ENCODE measurements at regions of chr19 and their contacts with region 1.

Region 1: GRCh38 chr19:13880059-13881043 is 3.4 kb downstream of the NANOS3 start:
- DNase-seq: peak; percentile 97
- ATAC-seq: peak; percentile 99
- H3K4me3 Mint-ChIP-seq: peak overlapping the region; percentile 19
- H3K27ac Mint-ChIP-seq: peak overlapping the region; percentile 30
- H3K4me1 Mint-ChIP-seq: peaks cover 28% of the 10 kb centered on the region
- H3K27me3 Mint-ChIP-seq: peaks cover 3% of the 10 kb centered on the region
- CTCF ChIP-seq: peak; percentile 98

Region 2: GRCh38 chr19:13905938-13906904 is 25.9 kb after region 1 on chr19 and contains the starts of genes BRME1 and CC2D1A:
- CTCF ChIA-PET with region 1: interaction called, 3 read pairs
- POLR2A ChIA-PET with region 1: interaction called, 5 read pairs
- intact Hi-C with region 1: loop called (anchors 2 kb)
- DNase-seq: peak; percentile 93
- ATAC-seq: peak; percentile 99
- H3K4me3 Mint-ChIP-seq: peak within 1 kb of the TSS; percentile 87
- H3K27ac Mint-ChIP-seq: peak within 1 kb of the TSS; percentile 78
- H3K4me1 Mint-ChIP-seq: peaks cover 11% of the 10 kb centered on the region
- H3K27me3 Mint-ChIP-seq: no peaks in the 10 kb centered on the region
- CTCF ChIP-seq: no peak
- total RNA-seq, gene BRME1: 1.2 and 2.0 TPM in 2 replicates
- total RNA-seq, gene CC2D1A: 32.4 and 35.6 TPM in 2 replicates

Region 3: DNA sequence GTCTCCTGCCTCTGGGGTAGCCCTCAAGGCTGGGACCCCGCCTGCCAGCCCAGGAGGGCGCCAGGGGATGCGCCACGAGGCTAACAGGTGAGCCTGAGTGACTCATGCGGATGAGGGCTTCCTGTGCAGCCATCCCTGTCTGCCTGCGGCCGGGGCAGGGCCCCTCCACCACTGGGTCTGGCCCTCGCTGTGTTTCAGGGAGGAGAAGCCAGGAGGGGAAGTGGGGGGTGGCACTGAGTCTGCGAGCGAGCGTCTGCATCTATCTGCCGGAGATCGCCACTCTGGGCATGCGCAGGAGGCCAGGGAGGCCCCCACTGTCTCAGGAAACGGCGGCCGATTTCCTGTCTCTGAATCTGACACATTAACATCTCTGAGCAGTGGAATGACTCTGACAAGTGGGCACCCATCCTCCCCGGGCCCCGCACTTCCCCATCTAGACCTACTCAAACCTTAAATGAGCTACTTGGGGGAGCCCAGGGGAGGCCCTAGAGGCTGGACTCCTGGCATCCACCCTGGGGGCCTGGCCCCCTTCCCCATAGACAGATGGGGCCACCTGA is 106.1 kb after region 1 on chr19:
- CTCF ChIA-PET with region 1: no interaction called
- POLR2A ChIA-PET with region 1: no interaction called
- intact Hi-C with region 1: no loop called
- DNase-seq: peak; percentile 94
- ATAC-seq: peak; percentile 83
- H3K4me3 Mint-ChIP-seq: peak overlapping the region; percentile 60
- H3K27ac Mint-ChIP-seq: peak overlapping the region; percentile 97
- H3K4me1 Mint-ChIP-seq: peaks cover 78% of the 10 kb centered on the region
- H3K27me3 Mint-ChIP-seq: no peaks in the 10 kb centered on the region
- CTCF ChIP-seq: no peak

Region 4: DNA sequence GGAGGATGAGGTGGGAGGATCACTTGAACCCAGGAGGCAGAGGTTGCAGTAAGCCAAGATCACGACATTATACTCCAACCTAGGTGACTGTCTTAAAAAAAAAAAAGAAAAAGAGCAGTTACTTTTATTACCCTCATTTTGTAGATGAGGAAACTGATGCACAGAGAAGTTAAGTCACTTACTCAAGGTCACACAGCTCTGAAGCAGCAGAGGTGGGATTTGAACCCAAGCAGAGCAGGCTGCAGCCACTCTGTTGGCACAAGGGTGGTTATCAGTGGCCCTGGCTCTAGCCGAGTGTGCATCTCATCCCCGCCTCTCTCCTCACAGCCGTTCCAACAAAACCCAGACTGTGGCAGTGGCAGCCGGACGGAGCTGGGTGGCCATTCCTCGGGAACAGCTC is 158.8 kb after region 1 on chr19:
- CTCF ChIA-PET with region 1: interaction called, 10 read pairs
- POLR2A ChIA-PET with region 1: no interaction called
- intact Hi-C with region 1: loop called (anchors 1 kb)
- DNase-seq: no peak
- ATAC-seq: no peak
- H3K4me3 Mint-ChIP-seq: no peak overlapping the region
- H3K27ac Mint-ChIP-seq: no peak overlapping the region
- H3K4me1 Mint-ChIP-seq: peaks cover 14% of the 10 kb centered on the region
- H3K27me3 Mint-ChIP-seq: no peaks in the 10 kb centered on the region
- CTCF ChIP-seq: no peak

Region 5: DNA sequence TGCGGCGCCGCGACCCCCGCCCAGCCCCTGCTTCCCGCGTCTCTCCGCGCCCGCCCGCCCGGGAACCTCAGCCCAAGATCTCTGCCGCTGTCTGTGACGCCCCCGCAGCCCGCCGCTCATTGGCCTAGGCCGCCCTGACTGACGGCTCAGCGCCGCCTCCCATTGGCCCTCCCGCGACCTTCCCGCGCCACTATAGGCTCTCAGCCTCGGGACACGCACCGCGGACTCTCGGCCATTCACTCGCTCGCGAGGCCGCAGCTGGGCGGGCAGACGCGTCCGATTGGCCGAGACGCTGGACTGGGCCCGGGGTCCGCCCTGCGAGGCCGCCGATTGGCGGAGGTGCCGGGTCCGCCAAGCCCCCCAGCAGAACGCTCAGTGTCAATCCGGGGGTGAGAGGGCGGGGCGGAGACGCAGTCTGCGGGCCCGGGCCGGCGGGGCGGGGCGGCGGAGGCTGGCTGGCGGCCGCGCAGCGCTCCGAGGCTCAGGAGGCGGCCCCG is 237.4 kb after region 1 on chr19 and contains the start of gene PRKACA:
- CTCF ChIA-PET with region 1: no interaction called
- POLR2A ChIA-PET with region 1: no interaction called
- intact Hi-C with region 1: loop called (anchors 1 kb)
- DNase-seq: peak; percentile 95
- ATAC-seq: peak; percentile 95
- H3K4me3 Mint-ChIP-seq: peak within 1 kb of the TSS; percentile 89
- H3K27ac Mint-ChIP-seq: peak within 1 kb of the TSS; percentile 68
- H3K4me1 Mint-ChIP-seq: peaks cover 42% of the 10 kb centered on the region
- H3K27me3 Mint-ChIP-seq: no peaks in the 10 kb centered on the region
- CTCF ChIP-seq: no peak
- total RNA-seq, gene PRKACA: 41.6 and 43.7 TPM in 2 replicates

Region 6: DNA sequence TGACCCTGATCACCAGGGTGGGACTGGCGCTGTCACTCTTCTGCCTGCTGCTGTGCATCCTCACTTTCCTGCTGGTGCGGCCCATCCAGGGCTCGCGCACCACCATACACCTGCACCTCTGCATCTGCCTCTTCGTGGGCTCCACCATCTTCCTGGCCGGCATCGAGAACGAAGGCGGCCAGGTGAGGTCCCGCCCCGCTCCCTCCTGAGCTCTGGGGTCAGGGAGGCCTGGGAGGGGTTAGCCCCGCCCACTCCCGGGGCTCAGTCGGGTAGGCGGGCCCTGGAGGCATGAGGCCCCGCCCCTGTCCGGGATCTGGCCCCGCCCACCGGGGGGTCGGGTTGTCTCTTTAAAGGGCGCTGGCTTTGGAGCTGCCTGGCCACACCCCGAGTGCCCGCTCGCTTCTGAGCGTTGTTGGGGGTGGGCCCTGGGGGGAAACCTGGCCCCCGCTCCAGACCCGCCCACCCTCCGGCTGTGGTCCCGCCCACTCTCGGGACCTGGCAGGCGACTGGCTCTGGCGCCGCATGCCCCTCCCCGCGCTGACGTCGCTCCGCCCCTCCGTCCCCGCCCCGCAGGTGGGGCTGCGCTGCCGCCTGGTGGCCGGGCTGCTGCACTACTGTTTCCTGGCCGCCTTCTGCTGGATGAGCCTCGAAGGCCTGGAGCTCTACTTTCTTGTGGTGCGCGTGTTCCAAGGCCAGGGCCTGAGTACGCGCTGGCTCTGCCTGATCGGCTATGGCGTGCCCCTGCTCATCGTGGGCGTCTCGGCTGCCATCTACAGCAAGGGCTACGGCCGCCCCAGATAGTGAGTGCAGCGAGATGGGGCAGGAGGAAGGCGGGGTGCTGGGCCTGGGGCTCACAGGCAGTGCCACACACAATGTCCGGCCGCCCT is 525.6 kb after region 1 on chr19:
- CTCF ChIA-PET with region 1: no interaction called
- POLR2A ChIA-PET with region 1: no interaction called
- intact Hi-C with region 1: loop called (anchors 1 kb)
- DNase-seq: peak; percentile 93
- ATAC-seq: peak; percentile 88
- H3K4me3 Mint-ChIP-seq: no peak overlapping the region
- H3K27ac Mint-ChIP-seq: peak overlapping the region; percentile 56
- H3K4me1 Mint-ChIP-seq: peaks cover 37% of the 10 kb centered on the region
- H3K27me3 Mint-ChIP-seq: no peaks in the 10 kb centered on the region
- CTCF ChIP-seq: no peak

Measured in activated B cell treated with CpG ODN at 0.5 μM for 24 hours (primary cell).